ENCODE measurements at regions of chr5 and their contacts with region 1.

Region 1: DNA sequence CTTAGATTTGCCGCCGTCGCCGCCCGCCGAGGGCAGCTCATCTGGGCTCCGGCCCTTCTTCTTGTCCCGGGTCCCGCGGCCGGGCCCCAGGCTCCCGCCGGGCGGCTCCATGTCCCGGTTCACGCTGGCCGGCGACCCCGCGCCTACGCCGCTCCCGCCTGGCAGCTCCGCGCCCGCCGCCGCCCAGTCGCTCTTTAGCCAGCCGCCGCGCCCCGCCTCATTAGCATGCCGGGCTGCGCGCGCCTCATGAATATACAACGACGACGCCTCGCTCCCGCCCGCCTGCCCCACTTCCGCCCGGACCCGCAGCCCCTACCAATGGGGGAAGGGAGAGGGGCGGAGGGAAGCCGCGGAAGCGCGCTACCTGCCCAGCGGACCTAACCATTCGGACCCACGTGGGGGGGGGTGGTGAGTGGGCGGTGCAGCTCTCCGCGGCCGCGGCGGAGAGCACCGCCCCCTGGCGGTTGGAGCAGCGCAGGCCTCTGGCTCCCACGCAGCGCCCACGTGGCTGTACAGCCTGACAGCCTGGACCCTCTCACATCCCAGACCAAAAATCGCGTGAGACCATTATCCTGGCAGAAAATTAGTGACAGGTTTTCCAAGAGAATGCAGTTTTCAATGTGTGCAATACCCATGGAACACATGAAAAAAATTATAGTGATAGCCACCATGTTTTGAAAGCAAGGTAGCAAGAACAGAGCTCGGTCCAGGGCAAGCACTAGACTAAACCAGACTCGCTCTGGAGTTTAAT is at the start of gene DIAPH1:
- DNase-seq: peak; percentile 96 to 98 (median 97)
- H3K4me3 ChIP-seq: peak within 1 kb of the TSS; percentile 86 to 95
- H3K4me3 Mint-ChIP-seq: peak within 1 kb of the TSS; percentile 94 to 100 (median 98)
- H3K27ac ChIP-seq: peak within 1 kb of the TSS; percentile 86
- H3K27ac Mint-ChIP-seq: peak within 1 kb of the TSS; percentile 93 to 99 (median 98)
- H3K4me1 ChIP-seq: peaks cover 45% of the 10 kb centered on the region
- H3K4me1 Mint-ChIP-seq: peaks cover 33 to 57% (median 44%) of the 10 kb centered on the region in 4 donors
- H3K27me3 ChIP-seq: no peaks in the 10 kb centered on the region
- H3K27me3 Mint-ChIP-seq: no peaks in the 10 kb centered on the region
- total RNA-seq, gene DIAPH1: 211 TPM

Region 2: GRCh38 chr5:141373673-141374317 is 245.2 kb before region 1 on chr5 and contains the start of gene PCDHGA6:
- CTCF ChIA-PET with region 1: no interaction called
- POLR2A ChIA-PET with region 1: no interaction called
- intact Hi-C with region 1: no loop called
- DNase-seq: no peak
- H3K4me3 ChIP-seq: no peak within 1 kb of the TSS
- H3K4me3 Mint-ChIP-seq: peak within 1 kb of the TSS in 7 of 8 donors; percentile 12 to 64 (median 61)
- H3K27ac ChIP-seq: no peak within 1 kb of the TSS
- H3K27ac Mint-ChIP-seq: no peak within 1 kb of the TSS
- H3K4me1 ChIP-seq: peaks cover 6% of the 10 kb centered on the region
- H3K4me1 Mint-ChIP-seq: peaks cover 4 to 11% (median 8%) of the 10 kb centered on the region in 4 donors
- H3K27me3 ChIP-seq: peaks cover 9% of the 10 kb centered on the region
- H3K27me3 Mint-ChIP-seq: peaks cover 34 to 36% of the 10 kb centered on the region in 2 donors
- total RNA-seq, gene PCDHGA6: 0.50 to 0.76 TPM

Region 3: DNA sequence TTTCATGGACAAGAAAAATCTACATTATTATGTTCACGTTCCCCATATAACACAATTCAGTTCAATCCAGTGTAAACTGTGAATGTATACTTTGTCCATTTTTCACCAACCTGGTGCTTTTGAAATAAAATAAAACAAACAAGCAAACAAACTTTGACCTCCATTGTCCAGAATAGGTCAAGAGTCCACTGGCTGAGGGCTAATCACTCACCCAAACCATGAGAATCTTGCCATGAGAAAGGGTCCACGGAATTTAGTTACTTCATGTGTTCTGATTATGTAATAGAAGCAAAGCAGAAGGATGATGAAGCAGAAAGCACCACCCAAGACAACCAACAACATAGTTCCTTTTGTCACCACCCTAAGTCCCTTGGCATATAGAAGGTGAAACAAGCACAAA is 28.9 kb before region 1 on chr5:
- CTCF ChIA-PET with region 1: interaction called, 712 read pairs
- POLR2A ChIA-PET with region 1: interaction called, 223 read pairs
- intact Hi-C with region 1: loop called (anchors 1 kb)
- DNase-seq: no peak
- H3K4me3 ChIP-seq: no peak overlapping the region
- H3K4me3 Mint-ChIP-seq: peak overlapping the region in 1 of 8 donors; percentile 3
- H3K27ac ChIP-seq: no peak overlapping the region
- H3K27ac Mint-ChIP-seq: peak overlapping the region in 3 of 7 donors; percentile 13 to 59 (median 43)
- H3K4me1 ChIP-seq: peaks cover 52% of the 10 kb centered on the region
- H3K4me1 Mint-ChIP-seq: peaks cover 45 to 70% (median 55%) of the 10 kb centered on the region in 4 donors
- H3K27me3 ChIP-seq: no peaks in the 10 kb centered on the region
- H3K27me3 Mint-ChIP-seq: no peaks in the 10 kb centered on the region

Region 4: DNA sequence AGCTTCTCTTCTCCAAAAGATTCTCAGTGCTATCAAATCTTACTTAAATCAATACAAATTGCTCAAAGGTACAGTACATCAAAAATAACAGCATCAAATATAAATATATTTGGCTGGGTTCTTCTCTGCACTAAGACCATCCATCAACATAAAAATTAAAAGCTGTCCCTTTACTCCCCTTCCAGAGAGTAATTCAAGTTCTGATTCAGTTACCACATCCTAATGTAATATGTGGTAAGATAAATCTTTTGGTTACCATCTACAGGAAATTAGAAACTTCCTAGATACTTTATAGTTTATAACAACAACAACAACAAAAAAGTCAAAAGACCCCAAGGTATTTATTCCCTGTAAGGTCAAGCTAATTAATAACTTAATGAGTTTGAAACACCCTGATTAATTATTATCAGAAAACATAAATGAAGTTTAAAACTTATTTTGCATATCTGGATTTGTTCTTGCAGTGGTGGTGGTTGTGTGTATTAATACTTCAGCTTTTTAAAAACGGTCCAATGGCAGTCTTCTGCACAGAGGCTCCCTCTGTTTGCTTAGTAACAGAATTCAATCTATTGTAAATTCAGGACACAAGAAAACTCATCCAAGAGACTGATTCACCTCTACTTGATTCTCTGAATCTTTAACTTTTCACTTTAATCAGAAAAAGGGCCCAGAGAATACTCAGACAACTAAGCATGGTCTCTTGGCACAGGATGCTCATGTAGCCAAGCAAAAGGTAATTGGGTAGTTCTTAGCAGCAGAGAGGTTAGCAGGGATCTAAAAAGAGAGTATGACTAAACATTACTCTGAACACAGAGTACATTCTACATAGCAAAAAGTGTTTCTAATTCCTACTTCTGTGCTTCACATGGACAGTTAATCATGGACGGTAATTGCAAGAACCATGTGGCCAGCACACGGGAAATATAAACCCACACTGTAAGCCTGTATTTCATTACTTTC is 20.3 kb before region 1 on chr5:
- CTCF ChIA-PET with region 1: interaction called, 712 read pairs
- POLR2A ChIA-PET with region 1: interaction called, 314 read pairs
- intact Hi-C with region 1: no loop called
- DNase-seq: peak in 2 of 5 donors; percentile 23 to 35
- H3K4me3 ChIP-seq: no peak overlapping the region
- H3K4me3 Mint-ChIP-seq: peak overlapping the region; percentile 43 to 80 (median 64)
- H3K27ac ChIP-seq: peak overlapping the region; percentile 34
- H3K27ac Mint-ChIP-seq: peak overlapping the region; percentile 70 to 94 (median 91)
- H3K4me1 ChIP-seq: peaks cover 92% of the 10 kb centered on the region
- H3K4me1 Mint-ChIP-seq: peaks cover 62 to 89% (median 76%) of the 10 kb centered on the region in 4 donors
- H3K27me3 ChIP-seq: no peaks in the 10 kb centered on the region
- H3K27me3 Mint-ChIP-seq: no peaks in the 10 kb centered on the region

Region 5: DNA sequence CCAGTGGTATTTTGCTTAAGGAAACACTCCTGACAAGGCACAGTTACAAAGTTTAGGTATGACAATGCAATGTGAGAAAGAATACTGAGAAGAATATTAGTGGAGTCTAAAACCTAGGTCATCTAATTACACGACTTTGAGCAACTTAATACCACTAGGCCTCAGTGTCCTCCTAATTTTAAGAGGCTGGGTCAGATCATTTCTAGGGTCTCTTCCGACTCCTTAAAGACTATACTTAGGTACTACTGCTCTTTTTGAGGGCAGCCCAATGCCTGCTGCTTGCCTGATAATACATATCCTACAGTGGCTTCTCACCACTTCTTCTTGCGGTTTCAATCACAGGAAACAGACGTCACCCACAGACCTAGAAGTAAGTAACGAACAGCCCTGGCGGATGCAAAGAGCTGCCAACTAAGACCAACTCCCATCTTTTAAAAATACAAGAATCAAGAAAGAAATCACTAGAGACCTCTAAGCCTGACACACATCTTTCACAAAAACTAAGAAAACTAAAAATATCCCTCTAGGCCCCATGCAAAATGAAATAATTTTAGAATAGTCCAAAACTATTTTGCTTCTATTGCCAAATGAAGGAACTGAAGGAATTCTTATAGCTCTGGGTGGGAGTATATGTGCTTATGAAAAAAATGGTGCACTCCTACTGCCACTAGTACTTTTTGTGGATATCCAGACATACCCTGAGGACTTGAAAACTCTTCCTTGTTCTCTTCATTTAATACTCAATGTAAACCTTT is 13.3 kb before region 1 on chr5:
- CTCF ChIA-PET with region 1: interaction called, 166 read pairs
- POLR2A ChIA-PET with region 1: interaction called, 314 read pairs
- intact Hi-C with region 1: loop called (anchors 1 kb)
- DNase-seq: peak; percentile 85 to 93 (median 87)
- H3K4me3 ChIP-seq: peak overlapping the region; percentile 13 to 34
- H3K4me3 Mint-ChIP-seq: peak overlapping the region; percentile 67 to 87 (median 81)
- H3K27ac ChIP-seq: peak overlapping the region; percentile 72
- H3K27ac Mint-ChIP-seq: peak overlapping the region; percentile 89 to 95 (median 93)
- H3K4me1 ChIP-seq: peaks cover 97% of the 10 kb centered on the region
- H3K4me1 Mint-ChIP-seq: peaks cover 62 to 95% (median 79%) of the 10 kb centered on the region in 4 donors
- H3K27me3 ChIP-seq: no peaks in the 10 kb centered on the region
- H3K27me3 Mint-ChIP-seq: no peaks in the 10 kb centered on the region

Measured in CD4-positive, alpha-beta memory T cell (primary cell).